BJ (cell line): ENCODE measurements at regions of chr17 and their contacts with region 1.

Region 1: DNA sequence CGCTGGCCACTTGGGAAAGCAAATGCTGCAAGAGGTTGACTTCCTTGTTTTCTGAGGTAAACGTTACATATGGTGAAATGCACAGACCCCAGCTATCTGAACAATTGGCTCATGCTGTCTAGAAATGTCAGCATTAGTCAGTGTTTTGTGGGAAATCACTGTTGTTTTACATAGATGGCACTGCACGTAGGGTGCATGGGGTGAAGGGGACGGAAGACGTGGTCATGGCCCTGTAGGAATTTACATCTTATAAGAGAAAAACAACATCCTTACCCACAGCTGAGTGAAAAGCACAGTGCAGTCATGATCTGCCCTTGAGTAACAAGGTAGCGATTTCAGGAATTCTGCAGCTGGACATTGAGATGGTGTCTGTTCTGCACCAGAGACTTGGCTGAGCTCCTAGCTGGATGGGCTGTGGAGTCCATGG is 15.2 kb downstream of the RPTOR start:
- DNase-seq: no peak
- H3K4me3 ChIP-seq: no peak overlapping the region
- H3K27me3 ChIP-seq: no peaks in the 10 kb centered on the region
- CTCF ChIP-seq: no peak

Region 2: DNA sequence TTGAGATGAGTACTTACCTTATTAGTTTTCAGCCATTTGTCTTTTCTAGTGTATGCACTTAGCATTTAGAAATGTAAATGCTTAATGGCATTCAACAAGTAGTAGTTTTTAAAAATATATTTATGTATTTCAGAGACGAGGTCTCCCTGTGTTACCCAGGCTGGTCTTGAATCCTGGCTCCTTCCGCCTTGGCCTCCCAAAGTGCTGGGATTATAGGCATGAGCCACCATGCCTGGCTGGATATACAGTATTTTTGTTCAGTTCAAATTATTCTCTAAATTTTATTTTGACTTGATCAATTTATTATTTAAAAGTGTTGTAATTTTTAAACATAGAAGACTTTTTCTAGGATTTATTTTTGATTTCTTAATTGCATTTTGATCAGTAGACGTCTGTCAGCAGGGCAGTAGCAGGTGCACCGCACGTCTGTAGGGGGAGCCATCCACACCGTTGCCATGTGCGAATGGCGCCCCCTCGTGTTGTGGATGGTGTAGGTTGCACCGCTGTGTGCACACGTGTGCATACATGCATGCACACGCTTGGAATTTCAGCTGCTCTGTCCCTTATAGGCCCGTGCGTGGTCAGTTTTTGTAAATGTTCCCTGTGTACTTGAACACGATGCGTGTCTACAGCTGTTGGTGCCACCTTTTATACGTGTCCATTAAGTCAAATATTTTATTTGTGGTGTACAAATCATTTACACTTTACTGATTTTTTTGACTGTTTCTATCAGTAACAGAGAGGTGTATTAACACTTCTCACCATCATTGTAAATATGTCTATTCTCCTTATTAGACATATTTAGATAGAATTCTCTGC is 15.4 kb after region 1 on chr17:
- CTCF ChIA-PET with region 1: interaction called, 20 read pairs
- POLR2A ChIA-PET with region 1: no interaction called
- DNase-seq: no peak
- H3K4me3 ChIP-seq: no peak overlapping the region
- H3K27me3 ChIP-seq: no peaks in the 10 kb centered on the region
- CTCF ChIP-seq: peak; percentile 100